ENCODE measurements at regions of chr20 and their contacts with region 1.

Region 1: GRCh38 chr20:32189691-32190615 is 17.6 kb downstream of the PLAGL2 start:
- DNase-seq: peak in 1 of 2 donors; percentile 88
- H3K4me3 ChIP-seq: peak overlapping the region; percentile 49
- CTCF ChIP-seq: no peak
- POLR2A ChIP-seq: no peak

Region 2: GRCh38 chr20:31894980-31895675 is 294.8 kb before region 1 on chr20:
- intact Hi-C with region 1: no loop called
- DNase-seq: peak; percentile 82 to 85
- H3K4me3 ChIP-seq: no peak overlapping the region
- CTCF ChIP-seq: no peak
- POLR2A ChIP-seq: no peak

Region 3: DNA sequence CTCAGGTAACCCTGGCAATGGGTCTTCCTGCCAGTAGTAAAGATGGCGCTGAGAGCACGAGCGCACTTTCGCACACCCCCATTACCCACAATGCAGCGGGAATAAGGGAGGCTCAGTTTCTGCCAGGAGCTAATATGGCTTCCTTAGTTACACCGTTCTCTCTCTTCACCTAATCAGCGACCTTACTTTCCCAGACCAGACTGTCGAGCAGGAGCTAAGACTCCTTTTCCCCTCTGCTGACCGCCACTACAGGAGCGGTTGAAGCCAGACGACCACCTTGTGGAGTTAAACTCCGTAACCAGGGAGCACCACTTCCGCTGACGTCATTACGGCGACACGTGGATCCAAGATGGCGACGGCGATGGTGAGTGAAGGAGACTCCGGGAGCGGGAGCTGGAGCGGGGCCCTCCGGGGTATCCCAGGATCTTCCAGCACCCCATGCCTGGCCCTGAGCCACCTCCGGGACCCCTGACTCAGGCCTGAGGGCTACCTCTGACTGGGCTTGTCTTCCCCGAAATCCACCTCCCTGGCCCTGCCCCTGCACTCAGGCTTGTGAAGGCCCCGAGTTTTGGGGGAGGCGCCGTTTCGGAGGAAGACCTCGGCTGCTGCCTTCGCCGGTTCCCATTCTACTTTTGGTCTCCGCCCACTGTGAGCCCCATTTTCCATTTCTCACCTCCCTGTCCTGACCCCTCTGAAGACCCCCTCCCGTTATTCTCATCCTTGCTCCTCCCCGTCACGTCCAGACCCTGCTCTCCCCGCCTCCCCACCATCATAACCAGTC is 80.4 kb before region 1 on chr20 and contains the start of gene TM9SF4:
- intact Hi-C with region 1: loop called (anchors 10 kb)
- DNase-seq: peak; percentile 89 to 97
- H3K4me3 ChIP-seq: peak within 1 kb of the TSS; percentile 56
- CTCF ChIP-seq: peak in 1 of 3 donors; percentile 50
- POLR2A ChIP-seq: no peak
- total RNA-seq, gene TM9SF4: 42.2 to 49.5 (median 47.3) TPM